ENCODE measurements at regions of chr7 and their contacts with region 1.

Region 1: GRCh38 chr7:30322271-30323005 is 38.0 kb downstream of the ZNRF2 start:
- DNase-seq: no peak
- H3K4me3 Mint-ChIP-seq: peak overlapping the region; percentile 73
- H3K27ac Mint-ChIP-seq: peak overlapping the region; percentile 86
- H3K4me1 Mint-ChIP-seq: peaks cover 72% of the 10 kb centered on the region
- H3K27me3 Mint-ChIP-seq: no peaks in the 10 kb centered on the region

Region 2: GRCh38 chr7:30308389-30308788 is 14.0 kb before region 1 on chr7:
- CTCF ChIA-PET with region 1: interaction called, 5 read pairs
- POLR2A ChIA-PET with region 1: no interaction called
- intact Hi-C with region 1: loop called (anchors 1 kb)
- DNase-seq: peak; percentile 24
- H3K4me3 Mint-ChIP-seq: no peak overlapping the region
- H3K27ac Mint-ChIP-seq: no peak overlapping the region
- H3K4me1 Mint-ChIP-seq: peaks cover 62% of the 10 kb centered on the region
- H3K27me3 Mint-ChIP-seq: no peaks in the 10 kb centered on the region

Region 3: GRCh38 chr7:30389791-30390190 is 67.4 kb after region 1 on chr7:
- CTCF ChIA-PET with region 1: no interaction called
- POLR2A ChIA-PET with region 1: no interaction called
- intact Hi-C with region 1: no loop called
- DNase-seq: no peak
- H3K4me3 Mint-ChIP-seq: no peak overlapping the region
- H3K27ac Mint-ChIP-seq: no peak overlapping the region
- H3K4me1 Mint-ChIP-seq: no peaks in the 10 kb centered on the region
- H3K27me3 Mint-ChIP-seq: no peaks in the 10 kb centered on the region

Measured in activated CD4-positive, alpha-beta memory T cell treated with anti-CD3 and anti-CD28 coated beads for 36 hours (primary cell).